CD4-positive, alpha-beta memory T cell (primary cell): ENCODE measurements at regions of chr11 and their contacts with region 1.

Region 1: DNA sequence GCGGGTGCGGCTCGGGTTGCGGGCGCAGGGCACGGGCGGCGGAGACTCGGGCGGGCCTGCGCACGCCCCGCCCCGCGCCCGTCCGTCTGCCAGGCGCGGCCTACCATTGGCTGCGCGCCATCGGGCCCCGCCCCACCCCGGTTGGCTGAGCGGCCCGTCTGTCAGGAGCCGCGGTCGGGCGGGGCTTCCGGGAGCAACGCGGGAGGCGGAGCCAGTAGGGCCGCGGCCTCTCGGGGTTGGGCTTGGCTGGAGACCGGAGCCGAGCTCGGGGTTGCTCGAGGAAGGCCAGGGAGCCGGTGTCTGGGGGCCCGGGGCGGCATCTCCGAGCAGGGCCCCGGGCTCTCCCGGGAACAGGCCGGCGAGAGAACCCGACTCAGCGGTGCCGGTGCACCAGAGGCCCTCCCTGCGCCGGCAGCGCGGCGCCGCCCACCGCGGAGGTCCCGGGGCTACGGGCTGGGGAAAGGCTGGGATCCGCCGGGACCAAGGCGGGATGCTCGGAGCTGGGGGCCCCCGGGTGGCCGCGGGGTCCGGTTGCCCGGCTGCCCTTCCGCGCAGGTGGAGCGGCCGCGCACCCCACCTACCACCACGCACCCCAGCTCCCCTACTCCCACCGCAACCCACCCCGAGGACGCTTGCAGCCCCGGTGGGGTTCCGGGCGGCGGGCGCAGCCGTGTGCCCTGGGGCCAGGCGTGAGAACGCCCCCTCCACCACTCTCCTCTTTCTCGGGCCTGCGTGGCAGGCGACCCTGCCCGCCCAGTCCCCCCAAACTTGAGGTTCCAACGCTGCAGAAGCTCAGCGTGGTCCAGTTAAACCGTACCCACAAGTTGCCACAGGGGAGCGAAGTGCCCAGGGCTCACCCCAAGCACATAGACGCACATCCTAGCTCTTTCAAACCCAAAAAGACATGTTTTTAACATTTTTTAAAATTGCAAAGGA is at the start of gene HRAS:
- DNase-seq: peak; percentile 93 to 98 (median 96)
- H3K4me3 ChIP-seq: peak within 1 kb of the TSS; percentile 29 to 69
- H3K4me3 Mint-ChIP-seq: peak within 1 kb of the TSS; percentile 90 to 98 (median 96)
- H3K27ac ChIP-seq: peak within 1 kb of the TSS; percentile 65
- H3K27ac Mint-ChIP-seq: peak within 1 kb of the TSS; percentile 92 to 98 (median 97)
- H3K4me1 ChIP-seq: peaks cover 40% of the 10 kb centered on the region
- H3K4me1 Mint-ChIP-seq: peaks cover 4 to 34% (median 16%) of the 10 kb centered on the region in 4 donors
- H3K27me3 ChIP-seq: no peaks in the 10 kb centered on the region
- H3K27me3 Mint-ChIP-seq: no peaks in the 10 kb centered on the region
- total RNA-seq, gene HRAS: 36.7 to 42.5 TPM

Region 2: DNA sequence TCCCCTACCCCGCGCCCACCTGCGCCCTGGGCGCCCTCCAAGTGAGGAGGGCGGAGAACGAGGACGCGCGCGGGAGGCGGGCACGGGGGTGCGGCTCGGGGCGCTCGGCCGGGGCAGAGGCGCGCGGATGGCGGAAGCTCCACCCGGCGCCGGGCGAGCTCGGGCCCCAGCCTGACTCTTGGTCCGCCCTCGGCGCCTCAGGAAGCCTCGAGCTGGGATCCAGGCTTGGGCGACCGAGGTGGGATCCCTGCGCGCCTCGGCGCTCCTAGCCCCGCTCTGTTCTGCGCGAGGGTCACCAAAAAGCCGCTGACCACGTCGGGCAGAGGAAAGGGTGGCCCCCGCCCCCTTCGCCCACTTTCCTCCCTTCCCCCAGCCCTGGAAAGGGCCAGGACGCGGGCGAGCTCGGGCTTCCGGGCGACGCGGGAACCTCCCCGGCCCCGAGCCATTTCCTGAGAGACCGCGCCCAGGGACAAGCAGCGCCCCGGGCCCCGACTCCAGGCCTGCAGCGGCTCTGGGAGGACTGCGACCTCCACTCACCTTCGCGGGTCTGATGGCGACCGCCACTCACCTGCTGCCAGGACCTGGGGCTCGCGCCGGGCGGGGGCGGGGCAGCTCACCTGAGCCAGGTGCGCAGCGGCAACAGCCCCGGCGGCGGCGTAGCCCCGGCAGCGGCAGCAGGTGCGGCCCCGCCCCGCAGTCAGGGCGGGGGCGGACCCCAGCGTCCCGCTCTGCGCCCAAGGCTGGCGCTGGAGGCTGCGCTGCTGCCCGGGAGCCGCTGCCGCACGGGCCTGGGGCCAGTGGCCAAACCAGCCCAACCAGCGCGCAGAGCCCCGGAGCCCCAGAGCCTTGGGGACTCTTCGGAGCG is 118.8 kb before region 1 on chr11:
- CTCF ChIA-PET with region 1: no interaction called
- POLR2A ChIA-PET with region 1: interaction called, 11 read pairs
- intact Hi-C with region 1: no loop called
- DNase-seq: peak in 4 of 5 donors; percentile 38 to 54 (median 45)
- H3K4me3 ChIP-seq: peak overlapping the region; percentile 17 to 73
- H3K4me3 Mint-ChIP-seq: peak overlapping the region; percentile 26 to 100 (median 96)
- H3K27ac ChIP-seq: peak overlapping the region; percentile 61
- H3K27ac Mint-ChIP-seq: peak overlapping the region in 4 of 7 donors; percentile 70 to 92 (median 83)
- H3K4me1 ChIP-seq: peaks cover 31% of the 10 kb centered on the region
- H3K4me1 Mint-ChIP-seq: peaks cover 4 to 42% (median 17%) of the 10 kb centered on the region in 4 donors
- H3K27me3 ChIP-seq: no peaks in the 10 kb centered on the region
- H3K27me3 Mint-ChIP-seq: no peaks in the 10 kb centered on the region

Region 3: DNA sequence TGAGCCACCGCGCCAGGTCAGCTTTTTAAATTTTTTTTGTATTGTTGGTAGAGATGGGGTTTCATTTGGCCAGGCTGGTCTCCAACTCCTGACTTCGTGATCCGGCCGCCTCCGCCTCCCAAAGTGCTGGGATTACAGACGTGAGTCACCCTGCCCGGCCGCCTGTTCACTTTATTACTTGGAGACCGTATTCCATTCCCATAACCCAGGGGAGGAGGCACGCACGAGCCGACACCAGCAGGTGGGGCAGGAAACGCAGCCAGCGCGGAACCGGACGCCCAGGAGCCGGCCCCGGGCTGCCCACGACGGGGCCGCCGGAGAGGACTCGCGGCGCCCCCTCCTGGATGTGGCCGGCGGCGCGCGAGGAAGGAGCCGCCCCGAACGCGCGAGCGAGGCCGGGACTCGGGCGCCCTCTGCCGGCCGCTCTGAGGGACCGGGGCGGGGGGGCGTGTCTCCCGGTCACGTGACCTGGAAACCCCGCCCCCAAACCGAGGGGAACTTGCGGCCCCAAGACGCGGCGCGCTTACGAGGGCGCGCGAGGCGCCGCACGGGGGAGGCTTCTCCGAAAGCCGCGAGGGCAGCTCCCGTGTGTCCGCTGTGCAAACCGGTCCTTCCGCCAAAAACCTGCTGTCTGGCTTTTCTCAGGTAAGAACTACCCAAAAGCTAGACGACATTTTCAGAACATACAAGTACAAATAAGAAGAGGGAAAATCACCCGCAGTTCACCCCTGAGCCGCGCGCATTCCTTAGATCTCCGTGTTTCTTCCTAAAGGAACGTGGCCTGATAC is 17.1 kb before region 1 on chr11:
- CTCF ChIA-PET with region 1: interaction called, 8 read pairs
- POLR2A ChIA-PET with region 1: interaction called, 16 read pairs
- intact Hi-C with region 1: loop called (anchors 1 kb)
- DNase-seq: peak; percentile 82 to 91 (median 84)
- H3K4me3 ChIP-seq: peak overlapping the region in 1 of 2 donors; percentile 30
- H3K4me3 Mint-ChIP-seq: peak overlapping the region; percentile 20 to 91 (median 84)
- H3K27ac ChIP-seq: no peak overlapping the region
- H3K27ac Mint-ChIP-seq: peak overlapping the region; percentile 80 to 92 (median 88)
- H3K4me1 ChIP-seq: peaks cover 4% of the 10 kb centered on the region
- H3K4me1 Mint-ChIP-seq: peaks cover 2 to 12% (median 3%) of the 10 kb centered on the region in 4 donors
- H3K27me3 ChIP-seq: no peaks in the 10 kb centered on the region
- H3K27me3 Mint-ChIP-seq: no peaks in the 10 kb centered on the region

Region 4: GRCh38 chr11:560305-561147 is 24.7 kb after region 1 on chr11 and contains the starts of genes LMNTD2 and RASSF7:
- CTCF ChIA-PET with region 1: interaction called, 11 read pairs
- POLR2A ChIA-PET with region 1: interaction called, 26 read pairs
- intact Hi-C with region 1: loop called (anchors 1 kb)
- DNase-seq: peak; percentile 92 to 95 (median 92)
- H3K4me3 ChIP-seq: peak within 1 kb of the TSS; percentile 69 to 75
- H3K4me3 Mint-ChIP-seq: peak within 1 kb of the TSS; percentile 84 to 94 (median 89)
- H3K27ac ChIP-seq: peak within 1 kb of the TSS; percentile 62
- H3K27ac Mint-ChIP-seq: peak within 1 kb of the TSS; percentile 80 to 93 (median 89)
- H3K4me1 ChIP-seq: peaks cover 22% of the 10 kb centered on the region
- H3K4me1 Mint-ChIP-seq: peaks cover 8 to 17% (median 13%) of the 10 kb centered on the region in 4 donors
- H3K27me3 ChIP-seq: no peaks in the 10 kb centered on the region
- H3K27me3 Mint-ChIP-seq: no peaks in the 10 kb centered on the region
- total RNA-seq, gene LMNTD2: 7.0 to 8.1 TPM
- total RNA-seq, gene RASSF7: 52.7 to 55.2 TPM

Region 5: GRCh38 chr11:575996-576768 is 40.4 kb after region 1 on chr11 and contains the start of gene PHRF1:
- CTCF ChIA-PET with region 1: interaction called, 3 read pairs
- POLR2A ChIA-PET with region 1: interaction called, 36 read pairs
- intact Hi-C with region 1: loop called (anchors 1 kb)
- DNase-seq: peak; percentile 95 to 98 (median 97)
- H3K4me3 ChIP-seq: peak within 1 kb of the TSS; percentile 85 to 93
- H3K4me3 Mint-ChIP-seq: peak within 1 kb of the TSS; percentile 94 to 98 (median 98)
- H3K27ac ChIP-seq: peak within 1 kb of the TSS; percentile 77
- H3K27ac Mint-ChIP-seq: peak within 1 kb of the TSS; percentile 93 to 99 (median 99)
- H3K4me1 ChIP-seq: peaks cover 58% of the 10 kb centered on the region
- H3K4me1 Mint-ChIP-seq: peaks cover 31 to 56% (median 45%) of the 10 kb centered on the region in 4 donors
- H3K27me3 ChIP-seq: no peaks in the 10 kb centered on the region
- H3K27me3 Mint-ChIP-seq: peaks cover 0 to 11% of the 10 kb centered on the region in 2 donors
- total RNA-seq, gene PHRF1: 49.2 to 54.5 TPM

Region 6: DNA sequence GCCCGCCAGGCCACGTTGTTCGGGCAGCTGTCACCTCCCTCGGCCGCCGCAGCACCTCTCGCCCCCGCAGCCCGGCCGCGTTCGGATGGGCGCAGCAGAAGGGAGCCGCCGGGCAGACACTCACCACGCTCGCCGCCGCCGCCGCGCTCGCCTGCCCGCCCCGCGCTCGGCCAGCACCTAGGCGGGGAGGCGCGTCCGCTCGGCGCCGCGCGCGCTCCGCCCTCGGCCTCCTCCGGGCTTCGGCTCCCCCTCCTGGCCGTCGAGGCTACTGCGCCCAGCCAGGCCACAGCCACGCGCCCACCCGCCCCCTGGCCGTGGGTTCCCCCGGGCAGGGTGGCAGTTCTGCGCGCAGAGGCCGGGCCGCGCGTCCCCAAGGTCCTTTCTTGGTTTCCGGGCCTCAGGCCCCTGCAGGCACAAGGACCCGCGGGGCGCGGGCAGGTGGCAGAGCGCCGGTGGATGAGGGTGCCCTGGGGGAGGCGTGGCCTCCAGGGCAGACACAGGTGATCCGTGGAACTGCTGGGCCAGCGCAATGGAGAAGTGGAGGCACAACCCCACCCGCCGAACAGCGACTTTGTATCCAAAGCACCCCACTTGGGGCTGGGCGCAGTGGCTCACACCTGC is 262.4 kb after region 1 on chr11 and contains the start of gene SLC25A22:
- CTCF ChIA-PET with region 1: no interaction called
- POLR2A ChIA-PET with region 1: no interaction called
- intact Hi-C with region 1: loop called (anchors 2 kb)
- DNase-seq: peak; percentile 80 to 90 (median 85)
- H3K4me3 ChIP-seq: peak within 1 kb of the TSS; percentile 73 to 91
- H3K4me3 Mint-ChIP-seq: peak within 1 kb of the TSS; percentile 86 to 97 (median 91)
- H3K27ac ChIP-seq: peak within 1 kb of the TSS; percentile 86
- H3K27ac Mint-ChIP-seq: peak within 1 kb of the TSS; percentile 93 to 96 (median 94)
- H3K4me1 ChIP-seq: peaks cover 32% of the 10 kb centered on the region
- H3K4me1 Mint-ChIP-seq: peaks cover 5 to 19% (median 10%) of the 10 kb centered on the region in 4 donors
- H3K27me3 ChIP-seq: no peaks in the 10 kb centered on the region
- H3K27me3 Mint-ChIP-seq: no peaks in the 10 kb centered on the region
- total RNA-seq, gene SLC25A22: 24.0 to 24.1 TPM